Calu3 (cell line): ENCODE measurements at regions of chr7 and their contacts with region 1.

Region 1: DNA sequence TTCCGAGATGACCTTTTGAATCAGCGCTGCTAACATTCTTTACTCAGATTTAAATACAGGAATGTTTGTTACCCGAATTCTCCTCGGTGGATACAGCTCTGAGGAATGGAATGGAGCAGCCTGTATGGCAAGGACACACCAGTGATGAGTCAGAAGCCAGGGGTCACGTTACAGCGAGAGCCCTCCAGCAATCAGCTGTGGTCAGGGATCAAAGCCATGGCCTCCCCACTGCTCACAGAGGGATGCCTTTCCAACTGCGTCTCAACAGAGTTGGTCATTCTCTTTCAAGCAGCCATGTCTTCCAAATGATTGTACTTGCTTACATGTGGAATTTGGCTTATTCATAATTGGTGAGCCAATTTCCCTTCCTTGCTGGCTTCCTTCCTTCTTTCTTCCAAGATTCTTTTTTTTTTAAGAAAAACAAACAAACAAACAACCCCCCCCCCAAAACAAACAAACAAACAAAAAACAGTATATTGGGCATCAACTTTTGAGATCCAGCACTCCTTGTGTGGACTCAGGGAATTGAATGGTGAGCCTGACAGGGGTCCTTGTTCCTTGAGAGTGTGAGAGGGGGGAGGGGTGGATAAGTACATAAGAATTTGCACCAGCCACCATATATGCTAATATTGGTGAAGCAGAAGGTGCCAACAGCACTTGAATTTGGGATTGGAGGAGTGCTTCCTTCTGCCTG is 100.2 kb downstream of the ATXN7L1 start:
- DNase-seq: peak; percentile 18
- H3K4me3 Mint-ChIP-seq: no peak overlapping the region
- H3K27ac Mint-ChIP-seq: no peak overlapping the region
- H3K4me1 Mint-ChIP-seq: peaks cover 7% of the 10 kb centered on the region
- H3K27me3 Mint-ChIP-seq: no peaks in the 10 kb centered on the region
- CTCF ChIP-seq: no peak

Region 2: GRCh38 chr7:105678811-105679495 is 97.3 kb before region 1 on chr7:
- CTCF ChIA-PET with region 1: no interaction called
- intact Hi-C with region 1: no loop called
- DNase-seq: no peak
- H3K4me3 Mint-ChIP-seq: peak overlapping the region; percentile 11
- H3K27ac Mint-ChIP-seq: no peak overlapping the region
- H3K4me1 Mint-ChIP-seq: peaks cover 26% of the 10 kb centered on the region
- H3K27me3 Mint-ChIP-seq: no peaks in the 10 kb centered on the region
- CTCF ChIP-seq: no peak

Region 3: DNA sequence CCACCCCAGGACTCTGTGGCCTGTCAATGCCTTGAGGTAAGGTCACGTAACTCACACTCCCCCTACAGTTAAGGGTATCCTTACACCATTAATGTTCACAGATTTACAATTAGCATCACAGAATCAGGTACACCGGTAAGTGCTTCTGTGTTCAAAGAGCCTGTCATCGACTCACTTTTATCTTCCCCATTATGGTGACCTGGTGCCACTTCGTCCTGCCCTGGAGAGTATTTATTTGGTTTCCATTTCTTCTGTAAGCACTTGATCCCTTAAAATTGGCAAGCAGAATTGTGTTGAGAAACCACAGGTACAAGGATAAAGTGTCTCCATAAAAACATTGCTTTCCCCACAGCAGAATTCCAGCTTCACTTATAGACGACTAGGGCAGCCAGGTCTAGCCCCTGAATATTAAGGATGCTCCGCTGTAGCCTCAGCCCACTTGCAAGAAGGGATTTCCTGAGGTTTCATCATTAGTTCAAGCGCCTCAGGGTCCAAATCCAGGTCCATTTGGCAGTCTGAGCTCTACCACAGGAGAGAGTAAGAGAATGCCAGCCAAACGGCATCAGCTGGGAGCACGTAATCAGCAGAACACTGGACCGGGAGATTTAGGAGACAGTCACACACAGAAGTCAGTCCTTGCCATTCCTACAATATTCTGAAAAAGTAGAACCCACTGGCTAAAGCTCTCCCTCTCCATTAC is 90.0 kb after region 1 on chr7:
- CTCF ChIA-PET with region 1: no interaction called
- intact Hi-C with region 1: loop called (anchors 5 kb)
- DNase-seq: no peak
- H3K4me3 Mint-ChIP-seq: no peak overlapping the region
- H3K27ac Mint-ChIP-seq: no peak overlapping the region
- H3K4me1 Mint-ChIP-seq: no peaks in the 10 kb centered on the region
- H3K27me3 Mint-ChIP-seq: no peaks in the 10 kb centered on the region
- CTCF ChIP-seq: no peak